Endothelial cell of umbilical vein (primary cell): ENCODE measurements at regions of chr14 and their contacts with region 1.

Region 1: DNA sequence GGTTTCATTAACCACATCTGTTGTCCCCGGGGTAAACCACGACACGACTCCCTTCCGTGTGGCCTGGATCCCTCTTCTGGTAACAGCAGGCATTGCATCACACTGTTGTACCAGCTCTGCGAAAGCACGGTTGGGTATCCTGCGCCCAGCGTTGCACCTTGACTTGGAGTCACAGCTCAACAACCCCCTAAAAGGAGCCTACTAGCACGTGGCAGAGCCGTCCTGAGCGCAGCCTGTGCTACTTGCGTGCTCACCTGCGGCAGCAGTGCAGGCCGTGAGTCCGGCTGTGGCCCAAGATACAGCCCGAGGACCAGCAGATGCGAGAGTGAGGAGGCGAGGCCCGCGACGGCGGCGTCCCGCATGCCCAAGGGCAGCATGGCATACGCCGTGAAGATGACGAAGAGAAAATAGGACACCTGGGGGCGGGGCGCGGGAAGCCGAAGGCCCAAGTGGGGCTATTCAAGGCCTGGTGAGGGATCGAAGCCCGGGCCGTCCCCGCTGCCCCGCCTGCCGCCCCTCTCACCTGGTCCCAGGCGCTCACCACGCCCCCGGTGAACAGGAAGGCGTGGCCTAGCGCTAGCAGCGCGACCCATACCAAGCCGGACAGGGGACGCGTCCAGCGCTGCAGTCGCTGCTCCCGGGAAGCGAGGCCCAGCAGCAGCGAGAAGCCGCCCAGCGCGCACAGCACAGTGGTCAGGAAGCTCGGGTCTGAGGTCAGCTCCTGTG is 2.4 kb downstream of the ADCY4 start:
- DNase-seq: peak; percentile 45
- H3K4me3 ChIP-seq: no peak overlapping the region
- H3K27ac ChIP-seq: no peak overlapping the region
- H3K4me1 ChIP-seq: peaks cover 29% of the 10 kb centered on the region
- H3K27me3 ChIP-seq: no peaks in the 10 kb centered on the region
- CTCF ChIP-seq: peak; percentile 55 to 72
- POLR2A ChIP-seq: no peak

Region 2: GRCh38 chr14:24123508-24124417 is 208.7 kb before region 1 on chr14:
- CTCF ChIA-PET with region 1: no interaction called
- POLR2A ChIA-PET with region 1: no interaction called
- dilution Hi-C with region 1: no loop called
- intact Hi-C with region 1: no loop called
- DNase-seq: no peak
- H3K4me3 ChIP-seq: no peak overlapping the region
- H3K27ac ChIP-seq: no peak overlapping the region
- H3K4me1 ChIP-seq: no peaks in the 10 kb centered on the region
- H3K27me3 ChIP-seq: no peaks in the 10 kb centered on the region
- CTCF ChIP-seq: no peak
- POLR2A ChIP-seq: no peak

Region 3: GRCh38 chr14:24310646-24311604 is 21.5 kb before region 1 on chr14 and contains the start of gene LTB4R:
- CTCF ChIA-PET with region 1: interaction called, 47 read pairs
- POLR2A ChIA-PET with region 1: no interaction called
- dilution Hi-C with region 1: no loop called
- intact Hi-C with region 1: loop called (anchors 1 kb)
- DNase-seq: peak; percentile 88
- H3K4me3 ChIP-seq: peak within 1 kb of the TSS in 1 of 3 experiments; percentile 19
- H3K27ac ChIP-seq: peak within 1 kb of the TSS; percentile 91
- H3K4me1 ChIP-seq: peaks cover 60% of the 10 kb centered on the region
- H3K27me3 ChIP-seq: no peaks in the 10 kb centered on the region
- CTCF ChIP-seq: peak; percentile 20 to 53
- POLR2A ChIP-seq: peak; percentile 34
- total RNA-seq, gene LTB4R: 6.2 and 10.5 TPM in 2 replicates

Region 4: GRCh38 chr14:24392325-24393091 is 60.1 kb after region 1 on chr14:
- CTCF ChIA-PET with region 1: interaction called, 9 read pairs
- POLR2A ChIA-PET with region 1: no interaction called
- dilution Hi-C with region 1: no loop called
- intact Hi-C with region 1: loop called (anchors 2 kb)
- DNase-seq: peak; percentile 70
- H3K4me3 ChIP-seq: peak overlapping the region in 1 of 3 experiments; percentile 19
- H3K27ac ChIP-seq: peak overlapping the region; percentile 48
- H3K4me1 ChIP-seq: peaks cover 23% of the 10 kb centered on the region
- H3K27me3 ChIP-seq: peaks cover 0 to 3% of the 10 kb centered on the region in 2 experiments
- CTCF ChIP-seq: peak in 1 of 2 donors; percentile 12
- POLR2A ChIP-seq: no peak

Region 5: GRCh38 chr14:24411443-24412389 is 79.3 kb after region 1 on chr14:
- CTCF ChIA-PET with region 1: interaction called, 73 read pairs
- POLR2A ChIA-PET with region 1: no interaction called
- dilution Hi-C with region 1: no loop called
- intact Hi-C with region 1: loop called (anchors 1 kb)
- DNase-seq: peak; percentile 70
- H3K4me3 ChIP-seq: no peak overlapping the region
- H3K27ac ChIP-seq: no peak overlapping the region
- H3K4me1 ChIP-seq: no peaks in the 10 kb centered on the region
- H3K27me3 ChIP-seq: no peaks in the 10 kb centered on the region
- CTCF ChIP-seq: peak; percentile 67 to 76
- POLR2A ChIP-seq: no peak

Region 6: GRCh38 chr14:24425704-24426103 is 93.3 kb after region 1 on chr14:
- CTCF ChIA-PET with region 1: interaction called, 811 read pairs
- POLR2A ChIA-PET with region 1: interaction called, 32 read pairs
- dilution Hi-C with region 1: no loop called
- intact Hi-C with region 1: no loop called
- DNase-seq: peak; percentile 83
- H3K4me3 ChIP-seq: peak overlapping the region in 1 of 3 experiments; percentile 22
- H3K27ac ChIP-seq: peak overlapping the region; percentile 97
- H3K4me1 ChIP-seq: peaks cover 48% of the 10 kb centered on the region
- H3K27me3 ChIP-seq: no peaks in the 10 kb centered on the region
- CTCF ChIP-seq: no peak
- POLR2A ChIP-seq: no peak

Region 7: GRCh38 chr14:24665440-24665991 is 333.1 kb after region 1 on chr14:
- CTCF ChIA-PET with region 1: no interaction called
- POLR2A ChIA-PET with region 1: no interaction called
- dilution Hi-C with region 1: no loop called
- intact Hi-C with region 1: no loop called
- DNase-seq: no peak
- H3K4me3 ChIP-seq: no peak overlapping the region
- H3K27ac ChIP-seq: no peak overlapping the region
- H3K4me1 ChIP-seq: no peaks in the 10 kb centered on the region
- H3K27me3 ChIP-seq: no peaks in the 10 kb centered on the region
- CTCF ChIP-seq: no peak
- POLR2A ChIP-seq: no peak

Region 8: GRCh38 chr14:25484235-25484634 is 1151.8 kb after region 1 on chr14:
- CTCF ChIA-PET with region 1: no interaction called
- POLR2A ChIA-PET with region 1: no interaction called
- dilution Hi-C with region 1: no loop called
- intact Hi-C with region 1: no loop called
- DNase-seq: no peak
- H3K4me3 ChIP-seq: no peak overlapping the region
- H3K27ac ChIP-seq: no peak overlapping the region
- H3K4me1 ChIP-seq: no peaks in the 10 kb centered on the region
- H3K27me3 ChIP-seq: no peaks in the 10 kb centered on the region
- CTCF ChIP-seq: no peak
- POLR2A ChIP-seq: no peak